GM10248 (cell line): ENCODE measurements at regions of chr19 and their contacts with region 1.

Region 1: GRCh38 chr19:38263689-38264485 is 486 bp upstream of the SPINT2 start:
- DNase-seq: peak; percentile 80
- CTCF ChIP-seq: no peak

Region 2: GRCh38 chr19:38213911-38214625 is 49.8 kb before region 1 on chr19:
- CTCF ChIA-PET with region 1: no interaction called
- POLR2A ChIA-PET with region 1: no interaction called
- DNase-seq: peak; percentile 51
- CTCF ChIP-seq: no peak

Region 3: GRCh38 chr19:38245826-38246498 is 17.9 kb before region 1 on chr19:
- CTCF ChIA-PET with region 1: interaction called, 16 read pairs
- POLR2A ChIA-PET with region 1: no interaction called
- DNase-seq: no peak
- CTCF ChIP-seq: no peak